B cell (primary cell): ENCODE measurements at regions of chr5 and their contacts with region 1.

Region 1: DNA sequence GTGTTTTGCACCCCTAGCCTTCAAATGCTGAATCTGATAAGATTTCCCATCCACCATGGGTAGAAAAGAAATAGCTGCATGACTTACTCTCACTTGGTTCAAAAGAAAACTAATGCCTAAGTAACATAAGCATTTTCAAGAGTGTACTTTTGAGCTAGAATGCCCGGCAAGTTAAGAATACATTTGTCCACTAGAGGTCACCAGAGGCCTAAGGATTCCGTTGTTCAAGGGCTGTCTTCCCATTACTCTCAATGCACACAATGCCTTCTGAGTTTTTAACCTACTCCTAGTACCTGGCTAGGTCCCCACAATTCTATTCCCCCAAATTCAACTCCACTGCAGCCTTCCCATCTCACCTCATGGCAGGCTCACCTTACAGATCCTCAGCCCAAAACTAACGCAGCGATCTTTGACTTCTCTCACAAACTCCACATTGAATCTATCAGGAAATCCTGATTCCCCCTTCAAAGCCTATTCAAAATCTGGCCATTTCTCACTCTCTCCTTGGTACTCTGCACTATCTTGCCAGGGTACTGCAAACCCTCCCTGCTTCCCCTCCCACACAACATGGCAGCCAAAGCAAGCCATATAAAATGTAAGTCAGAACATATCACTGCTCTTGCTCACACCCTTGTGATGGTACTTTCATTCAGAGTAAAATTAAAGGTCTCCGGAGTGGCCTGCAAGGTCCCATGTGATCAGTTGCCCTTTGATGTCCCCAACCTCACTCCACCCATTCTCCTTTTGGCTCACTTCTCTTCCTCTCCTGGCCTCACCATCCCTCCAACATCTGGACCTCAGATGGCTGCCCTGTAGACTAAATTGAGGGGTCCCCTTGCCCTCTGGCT is 13.4 kb downstream of the OXCT1 start:
- DNase-seq: peak; percentile 81
- ATAC-seq: peak; percentile 81
- H3K4me3 ChIP-seq: no peak overlapping the region
- H3K4me3 Mint-ChIP-seq: no peak overlapping the region
- H3K27ac ChIP-seq: no peak overlapping the region
- H3K27ac Mint-ChIP-seq: no peak overlapping the region
- H3K4me1 ChIP-seq: no peaks in the 10 kb centered on the region
- H3K4me1 Mint-ChIP-seq: no peaks in the 10 kb centered on the region
- H3K27me3 ChIP-seq: no peaks in the 10 kb centered on the region
- H3K27me3 Mint-ChIP-seq: no peaks in the 10 kb centered on the region
- CTCF ChIP-seq: peak; percentile 91

Region 2: GRCh38 chr5:41869739-41870626 is 13.1 kb after region 1 on chr5 and contains the start of gene OXCT1:
- CTCF ChIA-PET with region 1: interaction called, 19 read pairs
- POLR2A ChIA-PET with region 1: no interaction called
- intact Hi-C with region 1: no loop called
- DNase-seq: peak; percentile 95
- ATAC-seq: peak; percentile 95
- H3K4me3 ChIP-seq: peak within 1 kb of the TSS; percentile 74 to 97 (median 89)
- H3K4me3 Mint-ChIP-seq: peak within 1 kb of the TSS; percentile 94
- H3K27ac ChIP-seq: peak within 1 kb of the TSS; percentile 79 to 85
- H3K27ac Mint-ChIP-seq: peak within 1 kb of the TSS; percentile 95
- H3K4me1 ChIP-seq: peaks cover 16 to 20% of the 10 kb centered on the region in 2 donors
- H3K4me1 Mint-ChIP-seq: peaks cover 38% of the 10 kb centered on the region
- H3K27me3 ChIP-seq: no peaks in the 10 kb centered on the region
- H3K27me3 Mint-ChIP-seq: no peaks in the 10 kb centered on the region
- CTCF ChIP-seq: no peak
- total RNA-seq, gene OXCT1: 34.9 and 35.6 TPM in 2 replicates

Region 3: GRCh38 chr5:41932770-41933169 is 75.9 kb after region 1 on chr5:
- CTCF ChIA-PET with region 1: interaction called, 10 read pairs
- POLR2A ChIA-PET with region 1: no interaction called
- intact Hi-C with region 1: no loop called
- DNase-seq: no peak
- ATAC-seq: no peak
- H3K4me3 ChIP-seq: no peak overlapping the region
- H3K4me3 Mint-ChIP-seq: no peak overlapping the region
- H3K27ac ChIP-seq: no peak overlapping the region
- H3K27ac Mint-ChIP-seq: no peak overlapping the region
- H3K4me1 ChIP-seq: no peaks in the 10 kb centered on the region
- H3K4me1 Mint-ChIP-seq: no peaks in the 10 kb centered on the region
- H3K27me3 ChIP-seq: no peaks in the 10 kb centered on the region
- H3K27me3 Mint-ChIP-seq: no peaks in the 10 kb centered on the region
- CTCF ChIP-seq: no peak

Region 4: GRCh38 chr5:42057254-42057690 is 200.4 kb after region 1 on chr5:
- CTCF ChIA-PET with region 1: interaction called, 316 read pairs
- POLR2A ChIA-PET with region 1: no interaction called
- intact Hi-C with region 1: loop called (anchors 1 kb)
- DNase-seq: peak; percentile 68
- ATAC-seq: peak; percentile 78
- H3K4me3 ChIP-seq: no peak overlapping the region
- H3K4me3 Mint-ChIP-seq: no peak overlapping the region
- H3K27ac ChIP-seq: no peak overlapping the region
- H3K27ac Mint-ChIP-seq: no peak overlapping the region
- H3K4me1 ChIP-seq: no peaks in the 10 kb centered on the region
- H3K4me1 Mint-ChIP-seq: no peaks in the 10 kb centered on the region
- H3K27me3 ChIP-seq: no peaks in the 10 kb centered on the region
- H3K27me3 Mint-ChIP-seq: peaks cover 15% of the 10 kb centered on the region
- CTCF ChIP-seq: peak; percentile 84

Region 5: GRCh38 chr5:42131081-42131480 is 274.2 kb after region 1 on chr5:
- CTCF ChIA-PET with region 1: no interaction called
- POLR2A ChIA-PET with region 1: no interaction called
- intact Hi-C with region 1: no loop called
- DNase-seq: no peak
- ATAC-seq: no peak
- H3K4me3 ChIP-seq: no peak overlapping the region
- H3K4me3 Mint-ChIP-seq: no peak overlapping the region
- H3K27ac ChIP-seq: no peak overlapping the region
- H3K27ac Mint-ChIP-seq: no peak overlapping the region
- H3K4me1 ChIP-seq: no peaks in the 10 kb centered on the region
- H3K4me1 Mint-ChIP-seq: no peaks in the 10 kb centered on the region
- H3K27me3 ChIP-seq: no peaks in the 10 kb centered on the region
- H3K27me3 Mint-ChIP-seq: no peaks in the 10 kb centered on the region
- CTCF ChIP-seq: no peak

Region 6: GRCh38 chr5:42656651-42657015 is 799.8 kb after region 1 on chr5:
- CTCF ChIA-PET with region 1: interaction called, 17 read pairs
- POLR2A ChIA-PET with region 1: no interaction called
- intact Hi-C with region 1: loop called (anchors 1 kb)
- DNase-seq: peak; percentile 36
- ATAC-seq: peak; percentile 45
- H3K4me3 ChIP-seq: no peak overlapping the region
- H3K4me3 Mint-ChIP-seq: no peak overlapping the region
- H3K27ac ChIP-seq: no peak overlapping the region
- H3K27ac Mint-ChIP-seq: no peak overlapping the region
- H3K4me1 ChIP-seq: peaks cover 2 to 6% of the 10 kb centered on the region in 2 donors
- H3K4me1 Mint-ChIP-seq: peaks cover 5% of the 10 kb centered on the region
- H3K27me3 ChIP-seq: no peaks in the 10 kb centered on the region
- H3K27me3 Mint-ChIP-seq: peaks cover 10% of the 10 kb centered on the region
- CTCF ChIP-seq: peak; percentile 60